T-cell (primary cell): ENCODE measurements at regions of chr12 and their contacts with region 1.

Region 1: DNA sequence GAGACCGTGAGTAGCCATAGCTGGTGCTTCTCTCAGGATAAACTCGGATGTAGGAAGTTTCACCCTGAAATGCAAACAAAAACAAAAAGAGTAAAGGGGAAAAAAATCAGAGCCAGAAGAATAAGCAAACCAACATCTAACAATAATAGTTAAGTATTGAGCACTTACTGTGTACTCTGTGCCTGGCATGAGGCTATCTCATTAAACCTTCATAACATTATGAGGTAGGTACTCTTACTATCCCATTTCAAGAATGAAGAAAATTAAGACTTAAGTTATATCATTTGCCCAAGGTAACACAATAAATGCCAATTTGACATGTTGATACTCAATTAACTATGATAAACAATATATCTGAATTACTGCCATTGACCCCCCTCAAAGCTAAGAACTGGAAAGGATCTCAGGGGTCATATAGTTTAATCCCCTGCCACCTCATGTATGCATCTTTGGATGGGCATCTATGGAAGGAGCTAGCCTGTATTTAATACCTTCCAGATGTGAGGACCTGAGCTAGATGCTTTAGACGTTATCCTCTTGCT is 7.4 kb downstream of the SRSF9 start:
- DNase-seq: no peak
- ATAC-seq: no peak
- H3K4me3 ChIP-seq: no peak overlapping the region
- H3K4me3 Mint-ChIP-seq: no peak overlapping the region
- H3K27ac ChIP-seq: no peak overlapping the region
- H3K27ac Mint-ChIP-seq: no peak overlapping the region
- H3K4me1 ChIP-seq: peaks cover 0 to 12% of the 10 kb centered on the region in 2 experiments
- H3K4me1 Mint-ChIP-seq: peaks cover 21 to 27% (median 23%) of the 10 kb centered on the region in 3 donors
- H3K27me3 ChIP-seq: no peaks in the 10 kb centered on the region
- H3K27me3 Mint-ChIP-seq: no peaks in the 10 kb centered on the region

Region 2: GRCh38 chr12:120495723-120496412 is 33.7 kb after region 1 on chr12 and contains the start of gene DYNLL1:
- CTCF ChIA-PET with region 1: no interaction called
- POLR2A ChIA-PET with region 1: interaction called, 4 to 10 read pairs
- DNase-seq: peak; percentile 89 to 99 (median 95)
- ATAC-seq: peak; percentile 95 to 99 (median 97)
- H3K4me3 ChIP-seq: peak within 1 kb of the TSS; percentile 83 to 97
- H3K4me3 Mint-ChIP-seq: peak within 1 kb of the TSS; percentile 88 to 96 (median 91)
- H3K27ac ChIP-seq: peak within 1 kb of the TSS; percentile 63
- H3K27ac Mint-ChIP-seq: peak within 1 kb of the TSS; percentile 90 to 93
- H3K4me1 ChIP-seq: peaks cover 15 to 16% of the 10 kb centered on the region in 2 experiments
- H3K4me1 Mint-ChIP-seq: peaks cover 29 to 37% (median 30%) of the 10 kb centered on the region in 3 donors
- H3K27me3 ChIP-seq: no peaks in the 10 kb centered on the region
- H3K27me3 Mint-ChIP-seq: no peaks in the 10 kb centered on the region
- total RNA-seq, gene DYNLL1: 47.2 to 90.1 (median 75.5) TPM